PC-3 (cell line): ENCODE measurements at regions of chr17 and their contacts with region 1.

Region 1: DNA sequence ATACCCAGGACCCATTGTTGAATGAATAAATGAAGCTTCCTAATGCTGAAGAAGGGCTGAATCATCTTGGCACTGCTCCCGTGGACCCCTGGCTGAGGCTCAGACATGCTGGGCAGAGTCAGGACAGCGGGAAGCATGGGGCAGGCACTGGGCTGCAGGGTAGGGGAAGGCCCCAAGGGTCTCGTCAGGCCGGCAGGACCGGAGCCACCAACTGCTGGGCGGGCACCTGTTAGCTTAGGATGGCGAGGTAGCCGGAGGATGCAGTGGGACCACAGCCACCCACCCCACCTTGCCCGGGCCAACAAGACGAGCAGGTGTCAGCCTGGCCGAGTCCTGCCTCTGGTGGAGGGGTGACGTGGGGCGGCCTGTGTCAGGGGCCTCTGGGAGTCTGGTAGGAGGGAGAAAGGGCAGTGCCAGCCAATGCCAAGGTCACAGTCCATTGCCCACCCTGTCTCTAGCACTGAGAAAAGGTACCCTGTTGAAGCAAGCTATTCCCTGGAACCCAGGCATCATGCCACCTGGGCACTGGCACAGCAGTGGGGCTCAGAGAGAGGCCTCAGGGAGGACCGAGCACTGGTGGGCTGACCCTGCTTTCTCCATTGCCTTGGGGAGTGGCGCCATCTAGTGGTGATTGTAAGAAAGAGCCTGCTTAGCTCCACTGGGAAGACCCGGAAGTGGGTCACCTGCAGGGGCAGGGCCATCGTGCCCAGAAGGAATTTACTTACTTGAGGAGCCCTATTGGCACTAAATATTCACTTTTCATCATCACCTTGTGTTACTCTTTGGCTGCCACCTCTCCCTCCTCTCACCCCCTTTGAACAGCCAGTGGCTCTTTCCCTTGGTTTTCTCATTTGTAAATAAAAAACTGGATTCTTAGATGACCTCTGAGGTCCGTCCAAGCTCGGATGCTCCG is 3.0 kb upstream of the DLX3 start:
- DNase-seq: peak; percentile 97
- ATAC-seq: peak; percentile 71
- H3K4me3 ChIP-seq: peak overlapping the region; percentile 26; the same call in 1 of the 2 replicates
- H3K27ac ChIP-seq: no peak overlapping the region
- H3K4me1 ChIP-seq: peaks cover 32% of the 10 kb centered on the region
- H3K27me3 ChIP-seq: peaks cover 34% of the 10 kb centered on the region
- CTCF ChIP-seq: peak; percentile 99

Region 2: GRCh38 chr17:49567871-49568694 is 430.0 kb before region 1 on chr17:
- CTCF ChIA-PET with region 1: no interaction called
- POLR2A ChIA-PET with region 1: no interaction called
- intact Hi-C with region 1: loop called (anchors 5 kb)
- DNase-seq: peak; percentile 93
- ATAC-seq: peak; percentile 69
- H3K4me3 ChIP-seq: peak overlapping the region; percentile 72
- H3K27ac ChIP-seq: no peak overlapping the region
- H3K4me1 ChIP-seq: peaks cover 20% of the 10 kb centered on the region
- H3K27me3 ChIP-seq: no peaks in the 10 kb centered on the region
- CTCF ChIP-seq: peak; percentile 96

Region 3: GRCh38 chr17:49861150-49861892 is 136.7 kb before region 1 on chr17:
- CTCF ChIA-PET with region 1: interaction called, 45 read pairs
- POLR2A ChIA-PET with region 1: no interaction called
- intact Hi-C with region 1: loop called (anchors 1 kb)
- DNase-seq: peak; percentile 70
- ATAC-seq: peak; percentile 60
- H3K4me3 ChIP-seq: peak overlapping the region; percentile 18; the same call in 1 of the 2 replicates
- H3K27ac ChIP-seq: no peak overlapping the region
- H3K4me1 ChIP-seq: peaks cover 4% of the 10 kb centered on the region; the same call in 1 of the 2 replicates
- H3K27me3 ChIP-seq: no peaks in the 10 kb centered on the region
- CTCF ChIP-seq: peak; percentile 100

Region 4: DNA sequence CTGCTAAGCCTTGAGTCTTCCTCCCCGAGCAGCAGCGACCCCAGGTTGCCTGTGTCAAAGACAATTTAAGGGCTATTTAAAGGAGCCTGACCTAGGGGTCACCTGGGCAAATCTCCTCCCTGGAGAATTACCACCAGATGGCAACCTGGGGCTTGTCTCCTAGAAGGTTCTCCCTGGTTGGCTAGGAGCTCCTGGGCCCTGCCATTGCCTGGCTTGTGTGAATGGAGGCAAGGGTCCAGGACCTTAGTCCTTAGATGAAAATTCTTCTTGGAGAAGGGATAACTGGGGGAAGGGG is 98.9 kb before region 1 on chr17:
- CTCF ChIA-PET with region 1: interaction called, 37 read pairs
- POLR2A ChIA-PET with region 1: no interaction called
- intact Hi-C with region 1: loop called (anchors 1 kb)
- DNase-seq: peak; percentile 49
- ATAC-seq: peak; percentile 57
- H3K4me3 ChIP-seq: no peak overlapping the region
- H3K27ac ChIP-seq: no peak overlapping the region
- H3K4me1 ChIP-seq: peaks cover 5% of the 10 kb centered on the region
- H3K27me3 ChIP-seq: peaks cover 16% of the 10 kb centered on the region
- CTCF ChIP-seq: peak; percentile 64

Region 5: GRCh38 chr17:49926886-49927285 is 71.2 kb before region 1 on chr17:
- CTCF ChIA-PET with region 1: no interaction called
- POLR2A ChIA-PET with region 1: no interaction called
- intact Hi-C with region 1: no loop called
- DNase-seq: no peak
- ATAC-seq: no peak
- H3K4me3 ChIP-seq: no peak overlapping the region
- H3K27ac ChIP-seq: no peak overlapping the region
- H3K4me1 ChIP-seq: peaks cover 11% of the 10 kb centered on the region
- H3K27me3 ChIP-seq: 0 out of 2 replicates have a peak, but pooled peaks cover 5% of the 10 kb centered on the region
- CTCF ChIP-seq: no peak

Region 6: GRCh38 chr17:49976163-49976827 is 21.8 kb before region 1 on chr17:
- CTCF ChIA-PET with region 1: no interaction called
- POLR2A ChIA-PET with region 1: no interaction called
- intact Hi-C with region 1: no loop called
- DNase-seq: no peak
- ATAC-seq: no peak
- H3K4me3 ChIP-seq: no peak overlapping the region
- H3K27ac ChIP-seq: no peak overlapping the region
- H3K4me1 ChIP-seq: no peaks in the 10 kb centered on the region
- H3K27me3 ChIP-seq: peaks cover 48% of the 10 kb centered on the region
- CTCF ChIP-seq: no peak

Region 7: DNA sequence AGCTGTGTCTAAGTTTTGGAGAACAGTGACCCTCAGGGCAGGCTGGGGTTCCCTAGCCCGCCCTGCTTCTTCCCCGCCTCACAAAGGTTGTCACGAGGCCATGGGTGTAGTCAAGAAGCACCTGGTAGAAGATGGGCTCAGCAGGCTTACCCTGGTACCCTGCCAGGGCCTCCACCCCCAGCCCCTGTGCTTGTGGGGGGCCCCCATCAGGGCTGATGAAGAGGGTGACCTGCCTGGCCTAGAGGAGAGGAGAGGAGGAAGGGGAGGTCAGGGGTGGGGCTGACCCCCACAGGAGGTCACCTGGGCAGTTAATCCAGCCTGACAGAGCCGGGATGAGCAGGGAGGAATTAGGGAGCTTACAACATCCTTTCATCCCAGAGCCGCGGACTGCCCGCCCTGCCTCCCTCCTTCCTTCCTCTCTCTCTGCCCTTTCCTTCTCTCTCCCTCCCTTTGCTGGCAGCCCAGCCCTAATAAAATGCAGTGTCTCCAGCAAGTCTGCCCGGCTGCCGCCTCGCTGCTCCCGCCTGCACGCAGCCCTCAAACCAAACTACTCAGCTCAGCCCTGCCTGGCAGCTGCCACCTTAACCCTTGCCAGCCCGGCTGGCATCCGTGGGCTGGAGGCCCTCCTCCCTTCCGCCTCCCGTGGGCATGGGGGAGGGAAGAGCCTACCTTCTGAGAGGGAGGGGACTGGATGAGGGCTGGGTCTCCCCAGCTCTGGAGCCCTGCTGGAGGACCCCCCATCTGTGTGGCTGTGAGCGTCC is 10.2 kb before region 1 on chr17:
- CTCF ChIA-PET with region 1: interaction called, 10 read pairs
- POLR2A ChIA-PET with region 1: interaction called, 4 read pairs
- intact Hi-C with region 1: no loop called
- DNase-seq: peak; percentile 69
- ATAC-seq: peak; percentile 96
- H3K4me3 ChIP-seq: no peak overlapping the region
- H3K27ac ChIP-seq: no peak overlapping the region
- H3K4me1 ChIP-seq: peaks cover 8% of the 10 kb centered on the region
- H3K27me3 ChIP-seq: no peaks in the 10 kb centered on the region
- CTCF ChIP-seq: no peak

Region 8: GRCh38 chr17:50026901-50027630 is 29.0 kb after region 1 on chr17:
- CTCF ChIA-PET with region 1: no interaction called
- POLR2A ChIA-PET with region 1: no interaction called
- intact Hi-C with region 1: no loop called
- DNase-seq: peak; percentile 98
- ATAC-seq: peak; percentile 32
- H3K4me3 ChIP-seq: peak overlapping the region; percentile 62
- H3K27ac ChIP-seq: peak overlapping the region; percentile 96
- H3K4me1 ChIP-seq: peaks cover 31% of the 10 kb centered on the region
- H3K27me3 ChIP-seq: no peaks in the 10 kb centered on the region
- CTCF ChIP-seq: peak; percentile 97

Region 9: GRCh38 chr17:50047488-50048126 is 49.6 kb after region 1 on chr17:
- CTCF ChIA-PET with region 1: no interaction called
- POLR2A ChIA-PET with region 1: no interaction called
- intact Hi-C with region 1: no loop called
- DNase-seq: peak; percentile 95
- ATAC-seq: peak; percentile 31
- H3K4me3 ChIP-seq: no peak overlapping the region
- H3K27ac ChIP-seq: peak overlapping the region; percentile 89
- H3K4me1 ChIP-seq: peaks cover 90% of the 10 kb centered on the region
- H3K27me3 ChIP-seq: no peaks in the 10 kb centered on the region
- CTCF ChIP-seq: no peak